ENCODE measurements at regions of chr17 and their contacts with region 1.

Region 1: GRCh38 chr17:28849281-28849680 is 5.5 kb upstream of the ERAL1 start:
- DNase-seq: peak; percentile 60
- ATAC-seq: peak; percentile 75
- H3K4me3 Mint-ChIP-seq: no peak overlapping the region
- H3K27ac Mint-ChIP-seq: peak overlapping the region; percentile 24
- H3K4me1 Mint-ChIP-seq: peaks cover 9% of the 10 kb centered on the region
- H3K27me3 Mint-ChIP-seq: no peaks in the 10 kb centered on the region
- CTCF ChIP-seq: no peak

Region 2: DNA sequence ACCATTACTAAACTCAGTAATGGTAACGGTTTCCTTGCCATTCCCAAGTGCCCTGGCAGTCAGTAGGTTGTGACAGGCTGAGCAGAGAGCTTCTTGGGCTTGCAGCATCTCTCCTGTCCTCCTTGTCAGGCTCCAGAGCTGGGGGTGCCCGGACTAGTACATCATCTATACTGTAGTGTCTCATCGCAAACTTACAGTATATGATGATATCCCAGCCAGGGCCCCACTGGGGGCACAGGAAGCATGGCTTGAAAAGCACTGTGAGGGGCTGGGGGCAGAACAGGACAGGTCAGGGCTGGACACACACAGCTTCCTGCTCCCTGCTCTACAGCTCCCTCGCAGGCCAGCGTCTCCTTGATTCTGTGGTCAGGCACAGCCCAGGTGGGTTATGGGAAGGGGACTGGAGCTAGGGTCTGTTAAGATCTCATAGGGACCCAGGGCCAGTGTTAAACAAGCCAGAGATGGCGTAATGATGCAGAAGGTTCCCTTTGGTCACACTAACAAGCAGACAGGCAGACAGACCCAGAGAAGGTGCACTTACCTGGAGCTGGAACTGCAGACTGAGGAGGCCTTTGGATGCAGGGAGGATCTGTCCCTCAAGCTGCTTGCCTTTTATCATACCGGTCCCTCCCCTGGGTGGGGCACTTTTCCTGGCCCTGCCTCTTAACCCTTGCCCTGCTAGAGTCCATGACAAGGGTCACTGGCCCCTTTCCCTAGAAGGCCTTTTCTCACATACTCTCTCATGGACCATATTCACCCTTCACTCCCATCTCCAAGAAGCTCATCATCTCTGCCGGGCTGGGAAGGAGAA is 12.3 kb after region 1 on chr17:
- CTCF ChIA-PET with region 1: interaction called, 12 read pairs
- POLR2A ChIA-PET with region 1: no interaction called
- intact Hi-C with region 1: no loop called
- DNase-seq: no peak
- ATAC-seq: no peak
- H3K4me3 Mint-ChIP-seq: no peak overlapping the region
- H3K27ac Mint-ChIP-seq: no peak overlapping the region
- H3K4me1 Mint-ChIP-seq: peaks cover 15% of the 10 kb centered on the region
- H3K27me3 Mint-ChIP-seq: no peaks in the 10 kb centered on the region
- CTCF ChIP-seq: no peak

Region 3: DNA sequence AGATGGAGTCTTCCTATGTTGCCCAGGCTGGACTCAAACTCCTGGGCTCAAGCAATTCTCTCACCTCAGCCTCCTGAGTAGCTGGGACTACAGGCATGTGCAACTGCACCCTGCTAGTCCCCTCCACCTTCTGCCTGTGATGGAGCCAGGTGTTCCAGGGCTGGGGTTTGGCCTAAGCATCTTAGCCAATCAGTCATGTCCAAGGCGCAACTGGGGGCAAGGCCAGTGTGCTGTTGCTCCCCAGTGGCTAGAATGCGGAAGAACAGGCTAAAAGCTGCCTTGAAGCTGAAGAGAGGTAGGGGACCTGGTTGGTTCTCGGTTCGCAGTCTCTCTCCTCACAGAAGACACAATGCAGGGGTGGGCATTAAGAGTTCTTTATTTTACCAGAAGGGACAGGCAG is 29.7 kb after region 1 on chr17:
- CTCF ChIA-PET with region 1: interaction called, 13 read pairs
- POLR2A ChIA-PET with region 1: interaction called, 3 read pairs
- intact Hi-C with region 1: no loop called
- DNase-seq: peak; percentile 55
- ATAC-seq: peak; percentile 57
- H3K4me3 Mint-ChIP-seq: no peak overlapping the region
- H3K27ac Mint-ChIP-seq: peak overlapping the region; percentile 7
- H3K4me1 Mint-ChIP-seq: peaks cover 29% of the 10 kb centered on the region
- H3K27me3 Mint-ChIP-seq: no peaks in the 10 kb centered on the region
- CTCF ChIP-seq: no peak

Region 4: DNA sequence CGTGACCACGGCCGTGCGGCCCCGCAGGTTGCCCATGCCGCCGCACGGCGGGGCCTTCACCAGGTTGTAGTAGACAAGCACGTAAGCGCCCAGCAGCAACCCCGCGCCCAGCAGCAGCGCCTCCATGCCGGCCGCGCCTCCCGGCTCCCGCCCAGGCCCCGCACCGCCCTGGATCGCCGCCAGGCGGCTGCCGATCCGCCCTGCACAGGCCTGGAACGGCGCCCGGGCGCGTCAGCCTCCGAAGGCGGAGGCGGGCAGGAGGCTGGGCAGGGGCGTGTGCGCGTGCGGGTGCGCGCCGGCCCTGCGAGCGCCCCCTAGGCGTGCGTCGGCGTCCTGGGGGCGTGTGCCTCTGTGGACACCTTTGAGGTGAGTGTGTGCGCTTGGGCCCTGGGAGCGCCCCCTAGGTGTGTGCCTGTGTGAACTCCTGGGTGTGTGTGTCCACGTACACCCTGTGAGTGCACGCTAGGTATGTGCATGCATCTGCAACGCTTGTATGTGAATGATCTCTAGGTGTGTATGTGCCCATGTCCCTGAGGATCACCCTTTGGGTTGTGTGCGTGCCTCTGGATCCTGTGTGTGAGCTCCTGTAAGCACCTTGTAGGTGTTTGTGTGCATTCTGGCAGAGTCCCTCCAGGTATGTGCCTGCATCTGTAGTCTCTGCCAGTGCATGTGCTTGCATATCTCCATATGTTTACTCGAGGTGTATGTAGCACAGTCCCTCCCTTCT is 53.7 kb after region 1 on chr17 and contains the start of gene DHRS13:
- CTCF ChIA-PET with region 1: interaction called, 61 read pairs
- POLR2A ChIA-PET with region 1: interaction called, 7 read pairs
- intact Hi-C with region 1: loop called (anchors 5 kb)
- DNase-seq: peak; percentile 93
- ATAC-seq: peak; percentile 95
- H3K4me3 Mint-ChIP-seq: peak within 1 kb of the TSS; percentile 88
- H3K27ac Mint-ChIP-seq: peak within 1 kb of the TSS; percentile 86
- H3K4me1 Mint-ChIP-seq: peaks cover 31% of the 10 kb centered on the region
- H3K27me3 Mint-ChIP-seq: no peaks in the 10 kb centered on the region
- CTCF ChIP-seq: peak; percentile 100
- total RNA-seq, gene DHRS13: 37.3 to 38.2 TPM

Region 5: GRCh38 chr17:28916302-28916934 is 67.1 kb after region 1 on chr17:
- CTCF ChIA-PET with region 1: interaction called, 27 read pairs
- POLR2A ChIA-PET with region 1: interaction called, 3 read pairs
- intact Hi-C with region 1: no loop called
- DNase-seq: peak; percentile 65
- ATAC-seq: peak; percentile 79
- H3K4me3 Mint-ChIP-seq: no peak overlapping the region
- H3K27ac Mint-ChIP-seq: no peak overlapping the region
- H3K4me1 Mint-ChIP-seq: peaks cover 15% of the 10 kb centered on the region
- H3K27me3 Mint-ChIP-seq: no peaks in the 10 kb centered on the region
- CTCF ChIP-seq: peak; percentile 79

Region 6: DNA sequence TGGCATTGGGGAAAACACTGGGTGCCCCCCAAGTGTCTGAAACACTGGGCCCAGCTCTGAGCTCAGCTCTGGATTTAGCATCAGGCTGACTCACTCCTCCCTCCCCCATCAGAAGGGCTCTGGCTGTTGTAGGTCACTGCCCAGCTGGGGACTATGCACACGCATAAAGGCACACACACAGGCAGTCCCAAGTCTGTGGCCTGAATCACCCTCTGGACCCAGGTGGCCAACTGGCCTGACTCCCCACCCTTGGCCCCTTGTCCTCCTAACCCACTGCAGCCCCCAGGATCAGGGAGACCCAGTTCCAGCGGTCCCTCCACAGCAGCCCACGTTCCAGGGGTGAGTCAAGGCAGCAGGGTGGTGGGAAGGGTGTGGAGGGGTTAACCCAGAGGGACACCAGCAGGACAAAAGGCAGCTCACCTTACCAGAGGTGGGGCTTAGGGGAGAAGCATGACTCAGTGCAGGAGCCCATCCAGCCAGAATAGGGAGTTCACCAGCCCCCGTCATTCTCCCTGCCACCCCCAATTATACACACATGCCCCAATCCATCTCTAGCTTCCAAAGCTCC is 283.9 kb after region 1 on chr17:
- CTCF ChIA-PET with region 1: no interaction called
- POLR2A ChIA-PET with region 1: no interaction called
- intact Hi-C with region 1: no loop called
- DNase-seq: no peak
- ATAC-seq: peak; percentile 53
- H3K4me3 Mint-ChIP-seq: no peak overlapping the region
- H3K27ac Mint-ChIP-seq: peak overlapping the region; percentile 15
- H3K4me1 Mint-ChIP-seq: peaks cover 59% of the 10 kb centered on the region
- H3K27me3 Mint-ChIP-seq: no peaks in the 10 kb centered on the region
- CTCF ChIP-seq: no peak

Measured in activated CD8-positive, alpha-beta T cell treated with anti-CD3 and anti-CD28 coated beads for 36 hours (primary cell).